PC-3 (cell line): ENCODE measurements at regions of chr2 and their contacts with region 1.

Region 1: DNA sequence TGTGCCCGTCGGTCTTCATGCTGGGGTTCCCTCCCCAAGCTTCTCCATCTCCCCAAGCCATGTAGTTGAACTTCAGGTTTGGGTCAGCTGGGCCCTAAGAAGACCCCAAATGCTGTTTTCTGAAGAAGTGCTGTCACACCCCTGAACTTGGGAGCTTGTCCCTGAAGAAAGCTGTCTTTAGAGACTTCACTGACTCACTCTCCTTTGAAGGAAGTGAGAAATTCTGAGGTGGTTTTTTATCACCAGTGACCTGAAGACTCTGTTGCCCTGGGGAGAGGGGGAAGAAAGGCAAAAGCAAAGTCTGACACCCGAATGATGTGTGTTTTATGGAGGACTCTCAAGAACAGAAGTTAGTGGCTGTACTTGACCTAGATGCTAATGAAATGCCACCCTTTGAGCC is 83.6 kb upstream of the BCL2L11 start:
- DNase-seq: peak; percentile 79
- ATAC-seq: peak; percentile 66
- H3K4me3 ChIP-seq: no peak overlapping the region
- H3K27ac ChIP-seq: peak overlapping the region; percentile 42
- H3K4me1 ChIP-seq: peaks cover 40% of the 10 kb centered on the region
- H3K27me3 ChIP-seq: no peaks in the 10 kb centered on the region
- CTCF ChIP-seq: no peak

Region 2: DNA sequence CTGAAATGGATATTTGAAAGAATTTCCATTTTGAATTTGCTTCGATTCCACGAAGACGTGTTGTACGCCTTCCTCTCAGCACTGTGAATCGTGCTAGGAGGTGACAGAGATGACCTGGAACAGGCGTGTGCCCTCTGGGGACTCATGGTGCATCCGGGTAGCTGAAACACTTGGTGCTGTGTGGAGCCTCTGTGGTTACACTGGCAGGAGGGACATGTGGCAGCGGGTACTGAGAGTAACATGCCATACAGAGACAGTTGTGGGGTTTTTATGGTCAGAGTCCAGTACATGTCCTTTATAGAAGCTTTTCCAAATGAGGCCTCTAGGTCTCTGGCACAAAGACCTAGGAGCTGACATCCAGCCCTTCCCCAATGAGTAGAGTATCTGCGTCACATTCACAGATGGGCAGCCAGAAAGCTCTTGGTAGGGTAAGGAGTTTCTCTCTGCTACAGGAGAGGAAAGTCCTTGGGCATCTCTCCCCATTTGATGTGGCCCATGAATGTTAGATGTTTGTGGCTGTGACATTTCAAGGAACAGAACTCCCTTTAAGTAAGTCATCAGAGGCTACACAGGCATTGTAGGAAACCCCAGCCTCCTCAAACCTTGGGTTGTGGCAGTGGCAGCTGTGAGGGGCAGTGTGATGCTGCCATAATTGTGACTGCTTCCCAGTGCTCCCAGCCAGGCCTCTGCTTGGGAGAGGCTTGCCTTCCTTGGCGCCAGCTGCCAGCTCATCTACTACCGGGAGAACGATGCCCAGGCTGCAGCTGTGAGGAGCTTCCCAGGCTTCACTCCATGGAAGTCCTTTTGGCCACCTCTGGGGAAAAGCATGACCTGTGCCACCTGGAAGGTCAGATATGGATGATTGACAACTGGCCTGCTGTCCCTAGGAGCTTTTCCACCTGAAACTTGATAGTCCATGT is 224.1 kb before region 1 on chr2:
- CTCF ChIA-PET with region 1: interaction called, 3 read pairs
- POLR2A ChIA-PET with region 1: no interaction called
- intact Hi-C with region 1: loop called (anchors 5 kb)
- DNase-seq: no peak
- ATAC-seq: no peak
- H3K4me3 ChIP-seq: no peak overlapping the region
- H3K27ac ChIP-seq: no peak overlapping the region
- H3K4me1 ChIP-seq: peaks cover 2% of the 10 kb centered on the region; the same call in 1 of the 2 replicates
- H3K27me3 ChIP-seq: no peaks in the 10 kb centered on the region
- CTCF ChIP-seq: no peak

Region 3: DNA sequence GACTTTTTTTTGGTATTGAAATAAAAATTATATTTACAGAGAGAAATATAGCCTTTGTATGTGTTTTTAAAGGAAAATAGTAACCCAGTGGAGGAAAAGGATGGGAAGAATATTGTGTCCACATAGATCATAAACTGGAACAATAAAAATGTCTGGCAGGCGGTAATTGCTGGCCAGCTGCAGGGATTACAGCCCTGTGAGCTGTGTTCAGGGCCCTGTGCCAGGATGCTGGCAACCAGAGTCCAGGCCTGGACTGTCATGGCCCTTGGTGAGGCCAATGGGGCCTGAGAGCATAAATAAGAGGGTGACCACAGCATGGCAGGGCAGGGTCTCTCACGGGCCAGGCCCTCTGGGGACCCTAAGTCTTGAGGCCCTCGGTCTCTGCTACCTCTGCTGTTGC is 133.6 kb before region 1 on chr2:
- CTCF ChIA-PET with region 1: no interaction called
- POLR2A ChIA-PET with region 1: no interaction called
- intact Hi-C with region 1: no loop called
- DNase-seq: no peak
- ATAC-seq: no peak
- H3K4me3 ChIP-seq: no peak overlapping the region
- H3K27ac ChIP-seq: no peak overlapping the region
- H3K4me1 ChIP-seq: no peaks in the 10 kb centered on the region
- H3K27me3 ChIP-seq: no peaks in the 10 kb centered on the region
- CTCF ChIP-seq: no peak

Region 4: GRCh38 chr2:111071600-111072171 is 34.6 kb after region 1 on chr2:
- CTCF ChIA-PET with region 1: no interaction called
- POLR2A ChIA-PET with region 1: no interaction called
- intact Hi-C with region 1: loop called (anchors 2 kb)
- DNase-seq: peak; percentile 79
- ATAC-seq: peak; percentile 85
- H3K4me3 ChIP-seq: peak overlapping the region; percentile 29; the same call in 1 of the 2 replicates
- H3K27ac ChIP-seq: peak overlapping the region; percentile 93
- H3K4me1 ChIP-seq: peaks cover 42% of the 10 kb centered on the region
- H3K27me3 ChIP-seq: no peaks in the 10 kb centered on the region
- CTCF ChIP-seq: no peak

Region 5: DNA sequence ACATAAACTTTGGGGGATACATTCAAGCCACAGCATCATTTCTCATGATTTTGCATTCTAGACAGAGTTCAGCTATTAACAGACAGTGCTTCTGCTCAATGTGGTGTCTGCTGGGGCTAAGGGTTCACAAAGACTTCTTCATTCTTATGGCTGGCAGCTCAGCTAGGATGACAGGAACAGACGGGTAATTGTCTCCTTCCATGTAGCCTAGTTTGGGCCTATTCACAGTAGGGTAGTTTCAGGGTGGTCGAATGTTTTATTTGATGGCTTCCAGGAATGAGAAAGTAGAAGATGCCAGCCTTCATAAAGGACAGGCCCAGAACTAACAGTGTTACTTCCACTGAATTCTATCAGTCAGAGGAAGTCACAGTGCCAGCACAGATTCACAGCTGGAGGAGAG is 57.6 kb after region 1 on chr2:
- CTCF ChIA-PET with region 1: interaction called, 10 read pairs
- POLR2A ChIA-PET with region 1: no interaction called
- intact Hi-C with region 1: no loop called
- DNase-seq: no peak
- ATAC-seq: no peak
- H3K4me3 ChIP-seq: no peak overlapping the region
- H3K27ac ChIP-seq: no peak overlapping the region
- H3K4me1 ChIP-seq: no peaks in the 10 kb centered on the region; the same call in 1 of the 2 replicates
- H3K27me3 ChIP-seq: no peaks in the 10 kb centered on the region
- CTCF ChIP-seq: no peak

Region 6: DNA sequence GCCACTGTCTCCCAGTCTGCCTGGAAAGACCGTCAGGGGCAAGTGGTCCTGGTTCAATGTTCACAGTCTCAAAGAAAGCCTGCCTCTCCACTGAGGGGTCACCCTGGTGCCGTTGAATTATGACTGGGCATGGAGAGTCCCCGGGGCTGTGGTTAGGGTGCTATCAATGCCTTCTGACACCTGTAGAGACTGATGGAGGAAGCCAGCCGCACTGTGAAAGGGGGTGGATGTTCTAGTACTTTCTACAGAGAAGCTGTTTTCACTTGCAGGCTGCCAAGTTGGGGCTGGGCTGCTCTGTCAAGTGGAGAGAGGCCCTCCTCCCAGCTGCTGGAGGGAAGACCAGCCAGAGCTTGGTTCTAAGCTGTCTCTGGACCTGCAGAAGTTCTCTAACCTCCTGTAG is 164.1 kb after region 1 on chr2:
- CTCF ChIA-PET with region 1: no interaction called
- POLR2A ChIA-PET with region 1: no interaction called
- intact Hi-C with region 1: no loop called
- DNase-seq: no peak
- ATAC-seq: no peak
- H3K4me3 ChIP-seq: no peak overlapping the region
- H3K27ac ChIP-seq: no peak overlapping the region
- H3K4me1 ChIP-seq: peaks cover 7% of the 10 kb centered on the region
- H3K27me3 ChIP-seq: no peaks in the 10 kb centered on the region
- CTCF ChIP-seq: no peak